PC-9 (cell line): ENCODE measurements at regions of chr12 and their contacts with region 1.

Region 1: GRCh38 chr12:67068761-67069450 is 200.3 kb upstream of the CAND1 start:
- DNase-seq: peak; percentile 52 to 79
- H3K4me3 ChIP-seq: peak overlapping the region; percentile 76
- H3K27ac ChIP-seq: peak overlapping the region; percentile 48; the same call in 1 of the 2 replicates
- H3K4me1 ChIP-seq: peaks cover 27% of the 10 kb centered on the region
- H3K27me3 ChIP-seq: no peaks in the 10 kb centered on the region
- CTCF ChIP-seq: no peak

Region 2: GRCh38 chr12:66860752-66861750 is 207.9 kb before region 1 on chr12:
- CTCF ChIA-PET with region 1: no interaction called
- POLR2A ChIA-PET with region 1: no interaction called
- intact Hi-C with region 1: loop called (anchors 5 kb)
- DNase-seq: peak; percentile 44 to 59
- H3K4me3 ChIP-seq: no peak overlapping the region
- H3K27ac ChIP-seq: no peak overlapping the region
- H3K4me1 ChIP-seq: peaks cover 17% of the 10 kb centered on the region
- H3K27me3 ChIP-seq: no peaks in the 10 kb centered on the region
- CTCF ChIP-seq: peak; percentile 94

Region 3: DNA sequence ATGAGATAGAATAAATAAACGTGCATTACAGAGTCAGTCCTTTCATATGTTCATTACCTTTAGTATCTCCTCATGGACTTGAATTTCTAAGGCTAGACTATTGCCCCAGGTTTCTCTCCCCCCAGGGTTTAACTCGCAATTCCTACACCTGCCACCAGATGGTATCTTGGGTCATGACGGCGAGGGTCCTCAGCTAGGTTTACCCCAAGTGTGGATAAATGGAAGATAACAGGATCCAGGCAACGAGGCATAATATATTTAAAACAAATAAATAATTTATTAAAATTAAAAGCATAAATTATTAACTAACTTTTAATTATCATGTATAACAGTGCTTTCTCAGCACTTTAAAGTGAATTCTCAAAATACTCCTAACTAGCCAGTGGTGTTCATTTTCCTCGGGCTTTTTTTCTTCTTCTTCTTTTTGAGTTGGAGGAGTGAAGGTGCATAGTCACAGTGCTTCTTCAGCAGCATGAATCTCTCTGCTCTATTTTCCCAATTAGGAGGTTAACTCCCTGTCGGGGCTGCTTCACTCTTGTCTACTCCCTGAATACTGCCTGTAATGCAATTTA is 43.3 kb before region 1 on chr12:
- CTCF ChIA-PET with region 1: interaction called, 3 read pairs
- POLR2A ChIA-PET with region 1: no interaction called
- intact Hi-C with region 1: loop called (anchors 5 kb)
- DNase-seq: peak in 1 of 2 experiments; percentile 30
- H3K4me3 ChIP-seq: no peak overlapping the region
- H3K27ac ChIP-seq: no peak overlapping the region
- H3K4me1 ChIP-seq: no peaks in the 10 kb centered on the region
- H3K27me3 ChIP-seq: no peaks in the 10 kb centered on the region
- CTCF ChIP-seq: peak; percentile 84

Region 4: DNA sequence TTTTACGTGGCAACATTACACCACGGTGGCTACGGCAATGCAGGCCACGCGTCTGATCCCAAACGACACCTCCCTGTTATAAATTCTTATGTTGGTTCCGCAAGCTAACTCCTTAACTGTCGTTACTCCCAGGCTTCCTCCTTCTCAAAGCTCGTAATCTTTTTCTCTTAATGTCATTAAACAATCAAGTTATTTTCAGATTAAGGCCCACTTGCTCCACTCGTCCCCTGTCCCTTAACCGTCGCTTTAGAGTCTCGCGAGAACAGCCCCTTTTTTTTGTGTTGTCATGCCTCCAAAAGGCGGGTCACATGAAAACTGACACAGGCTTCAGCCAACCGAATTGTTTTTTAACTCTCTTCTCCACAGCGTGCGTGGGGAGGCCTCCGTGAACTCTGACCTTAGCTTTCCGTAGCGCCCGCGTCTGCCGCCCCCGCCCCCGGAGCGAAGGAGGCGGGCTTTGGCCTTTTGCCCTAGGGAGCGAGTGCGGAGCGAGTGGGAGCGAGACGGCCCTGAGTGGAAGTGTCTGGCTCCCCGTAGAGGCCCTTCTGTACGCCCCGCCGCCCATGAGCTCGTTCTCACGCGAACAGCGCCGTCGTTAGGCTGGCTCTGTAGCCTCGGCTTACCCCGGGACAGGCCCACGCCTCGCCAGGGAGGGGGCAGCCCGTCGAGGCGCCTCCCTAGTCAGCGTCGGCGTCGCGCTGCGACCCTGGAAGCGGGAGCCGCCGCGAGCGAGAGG is 200.2 kb after region 1 on chr12 and contains the start of gene CAND1:
- CTCF ChIA-PET with region 1: no interaction called
- POLR2A ChIA-PET with region 1: interaction called, 5 read pairs
- intact Hi-C with region 1: loop called (anchors 5 kb)
- DNase-seq: peak; percentile 93 to 96
- H3K4me3 ChIP-seq: peak within 1 kb of the TSS; percentile 96
- H3K27ac ChIP-seq: peak within 1 kb of the TSS; percentile 93
- H3K4me1 ChIP-seq: peaks cover 31% of the 10 kb centered on the region
- H3K27me3 ChIP-seq: no peaks in the 10 kb centered on the region
- CTCF ChIP-seq: no peak
- total RNA-seq, gene CAND1: 163 and 169 TPM in 2 replicates